Breast epithelium (tissue), 4 donors: ENCODE measurements at regions of chr3 and their contacts with region 1.

Region 1: GRCh38 chr3:70038693-70039092 is 39.2 kb downstream of the SAMMSON start:
- DNase-seq: no peak
- H3K4me3 ChIP-seq: no peak overlapping the region
- H3K27ac ChIP-seq: no peak overlapping the region
- H3K4me1 ChIP-seq: no peaks in the 10 kb centered on the region
- H3K27me3 ChIP-seq: no peaks in the 10 kb centered on the region
- CTCF ChIP-seq: no peak
- POLR2A ChIP-seq: no peak

Region 2: GRCh38 chr3:70072180-70072579 is 33.5 kb after region 1 on chr3:
- intact Hi-C with region 1: no loop called
- DNase-seq: no peak
- H3K4me3 ChIP-seq: peak overlapping the region in 2 of 3 donors; percentile 1 to 17
- H3K27ac ChIP-seq: no peak overlapping the region
- H3K4me1 ChIP-seq: no peaks in the 10 kb centered on the region
- H3K27me3 ChIP-seq: no peaks in the 10 kb centered on the region
- CTCF ChIP-seq: no peak
- POLR2A ChIP-seq: no peak

Region 3: DNA sequence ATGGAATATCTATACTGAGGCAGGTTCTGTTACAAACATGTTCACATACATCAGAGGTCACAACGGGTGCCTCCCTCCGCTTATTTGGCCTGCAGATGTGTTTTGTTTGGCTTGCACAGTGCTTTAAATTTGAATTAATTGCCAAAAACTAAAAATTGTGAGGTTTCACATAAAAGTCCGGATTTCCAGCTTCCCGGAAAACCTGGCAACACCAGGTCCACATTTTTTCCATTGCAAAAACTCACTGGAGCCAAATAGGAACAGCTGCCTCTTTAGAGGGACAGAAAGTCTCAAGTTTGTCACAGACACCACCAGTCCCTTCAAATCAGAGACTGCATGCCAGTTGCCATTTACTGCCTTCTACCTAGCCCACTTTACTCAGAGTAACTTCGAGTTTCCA is 479.7 kb after region 1 on chr3:
- intact Hi-C with region 1: loop called (anchors 5 kb)
- DNase-seq: no peak
- H3K4me3 ChIP-seq: no peak overlapping the region
- H3K27ac ChIP-seq: no peak overlapping the region
- H3K4me1 ChIP-seq: no peaks in the 10 kb centered on the region
- H3K27me3 ChIP-seq: no peaks in the 10 kb centered on the region
- CTCF ChIP-seq: no peak
- POLR2A ChIP-seq: no peak